HEK293 (cell line): ENCODE measurements at regions of chr22 and their contacts with region 1.

Region 1: DNA sequence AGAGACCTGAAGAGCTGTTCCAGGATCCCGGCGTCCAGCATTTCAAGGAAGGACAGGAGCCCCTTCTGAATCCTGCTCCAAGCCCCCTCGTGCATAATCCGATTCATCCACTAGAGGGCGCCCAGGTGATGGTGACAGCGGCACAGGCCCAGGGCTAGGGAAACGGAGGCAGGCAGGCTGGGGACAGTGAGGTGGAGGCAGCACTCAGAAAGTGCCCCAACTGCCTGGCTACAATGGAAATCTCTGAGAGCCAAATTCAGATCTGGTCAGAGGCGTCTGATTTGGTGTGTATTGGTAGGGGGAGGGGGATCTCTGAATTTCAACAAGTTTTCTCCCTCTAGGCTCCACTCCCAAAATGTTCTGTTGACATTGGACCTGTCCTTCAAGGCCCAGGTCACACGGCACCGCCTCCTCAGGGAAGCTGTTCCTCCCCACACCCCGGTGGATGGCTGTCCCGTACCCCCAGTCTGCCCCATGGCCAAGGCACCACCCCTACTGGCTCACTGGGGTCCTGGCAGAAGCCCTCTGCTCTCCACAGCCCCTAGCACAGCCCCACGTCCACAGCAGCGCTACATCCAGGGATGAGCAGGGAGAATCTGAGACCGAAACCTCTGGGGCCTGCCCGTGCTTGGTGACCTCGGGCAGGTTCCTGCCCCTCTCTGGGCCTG is 142.9 kb downstream of the CRYBB2 start:
- H3K4me3 ChIP-seq: no peak overlapping the region
- H3K27ac ChIP-seq: no peak overlapping the region
- H3K4me1 ChIP-seq: no peaks in the 10 kb centered on the region
- CTCF ChIP-seq: peak; percentile 74

Region 2: DNA sequence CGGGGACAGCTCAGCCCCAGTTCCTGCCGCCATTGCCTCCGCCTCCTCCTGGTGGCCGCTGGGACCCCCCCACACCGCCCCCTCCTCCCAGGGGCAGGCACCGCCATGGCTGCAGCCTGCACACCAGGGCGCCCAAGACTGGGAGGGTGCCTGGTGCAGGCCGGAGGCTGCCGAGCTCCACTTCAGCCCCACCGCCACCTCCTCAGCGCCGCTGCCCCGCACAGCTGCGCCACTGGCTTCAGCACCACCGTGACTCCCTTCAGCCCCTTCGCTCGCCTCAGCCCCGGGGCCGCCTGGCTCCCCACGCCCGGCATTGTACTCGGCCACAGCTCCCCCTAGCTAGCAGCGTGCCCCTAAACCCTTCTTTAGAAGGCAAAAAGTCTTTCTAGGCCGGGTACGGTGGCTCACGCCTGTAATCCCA is 11.8 kb before region 1 on chr22:
- CTCF ChIA-PET with region 1: interaction called, 22 read pairs
- POLR2A ChIA-PET with region 1: interaction called, 4 read pairs
- H3K4me3 ChIP-seq: no peak overlapping the region
- H3K27ac ChIP-seq: no peak overlapping the region
- H3K4me1 ChIP-seq: no peaks in the 10 kb centered on the region
- CTCF ChIP-seq: no peak